ENCODE measurements at regions of chr4 and their contacts with region 1.

Region 1: GRCh38 chr4:94877973-94878372 is 120.2 kb downstream of the BMPR1B start:
- DNase-seq: peak; percentile 66
- ATAC-seq: peak; percentile 76
- H3K4me3 ChIP-seq: no peak overlapping the region
- H3K27ac ChIP-seq: peak overlapping the region; percentile 84; the same call in 1 of the 2 replicates
- H3K4me1 ChIP-seq: peaks cover 10% of the 10 kb centered on the region
- H3K27me3 ChIP-seq: no peaks in the 10 kb centered on the region
- CTCF ChIP-seq: no peak
- POLR2A ChIP-seq: no peak
- RAD21 ChIP-seq: no peak

Region 2: GRCh38 chr4:94641702-94642560 is 236.0 kb before region 1 on chr4:
- CTCF ChIA-PET with region 1: no interaction called
- POLR2A ChIA-PET with region 1: no interaction called
- dilution Hi-C with region 1: no loop called
- in situ Hi-C with region 1: no loop called
- intact Hi-C with region 1: loop called (anchors 10 kb)
- DNase-seq: peak; percentile 78
- ATAC-seq: peak; percentile 83
- H3K4me3 ChIP-seq: no peak overlapping the region
- H3K27ac ChIP-seq: no peak overlapping the region
- H3K4me1 ChIP-seq: peaks cover 2% of the 10 kb centered on the region; the same call in 1 of the 2 replicates
- H3K27me3 ChIP-seq: no peaks in the 10 kb centered on the region
- CTCF ChIP-seq: no peak
- POLR2A ChIP-seq: no peak
- RAD21 ChIP-seq: no peak

Region 3: DNA sequence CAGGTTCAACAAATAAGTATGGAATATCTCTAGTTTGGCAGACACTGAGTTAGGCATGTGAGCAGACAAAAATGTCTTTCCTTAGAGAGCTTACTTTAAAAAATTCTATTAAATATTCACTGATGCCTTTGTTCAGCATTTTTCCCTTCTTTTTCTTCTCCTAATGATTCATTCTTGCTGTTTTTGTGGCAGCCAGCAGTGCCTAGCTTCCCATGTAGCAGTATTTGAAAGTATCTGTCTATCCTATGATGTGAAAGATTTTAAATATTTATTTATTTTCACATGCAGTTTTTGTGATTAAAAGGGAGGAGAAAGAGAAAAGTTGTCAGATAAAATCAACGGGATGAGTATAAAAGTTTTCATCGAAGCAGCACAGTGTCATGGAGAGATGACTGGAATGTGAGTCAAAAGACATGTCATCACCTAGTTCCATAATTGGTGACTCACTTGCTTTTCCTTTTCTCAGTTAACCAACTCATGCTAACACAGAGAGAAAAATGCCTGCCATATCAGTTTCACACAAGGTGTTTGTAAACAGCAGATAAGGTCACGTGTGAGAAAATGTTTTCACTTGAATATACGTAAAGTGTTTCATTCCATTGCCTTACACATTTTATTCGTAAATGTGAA is 50.4 kb before region 1 on chr4:
- CTCF ChIA-PET with region 1: interaction called, 5 read pairs
- POLR2A ChIA-PET with region 1: no interaction called
- dilution Hi-C with region 1: no loop called
- in situ Hi-C with region 1: no loop called
- intact Hi-C with region 1: loop called (anchors 5 kb)
- DNase-seq: peak; percentile 92
- ATAC-seq: peak; percentile 98
- H3K4me3 ChIP-seq: no peak overlapping the region
- H3K27ac ChIP-seq: 0 out of 2 replicates have a peak overlapping the region, but pooled peaks have one; percentile 29
- H3K4me1 ChIP-seq: peaks cover 2% of the 10 kb centered on the region; the same call in 1 of the 2 replicates
- H3K27me3 ChIP-seq: no peaks in the 10 kb centered on the region; the same call in 1 of the 2 replicates
- CTCF ChIP-seq: no peak
- POLR2A ChIP-seq: no peak
- RAD21 ChIP-seq: no peak

Region 4: GRCh38 chr4:94897023-94897422 is 19.1 kb after region 1 on chr4:
- CTCF ChIA-PET with region 1: no interaction called
- POLR2A ChIA-PET with region 1: no interaction called
- dilution Hi-C with region 1: no loop called
- in situ Hi-C with region 1: no loop called
- intact Hi-C with region 1: no loop called
- DNase-seq: no peak
- ATAC-seq: no peak
- H3K4me3 ChIP-seq: no peak overlapping the region
- H3K27ac ChIP-seq: no peak overlapping the region
- H3K4me1 ChIP-seq: no peaks in the 10 kb centered on the region
- H3K27me3 ChIP-seq: no peaks in the 10 kb centered on the region
- CTCF ChIP-seq: no peak
- POLR2A ChIP-seq: no peak
- RAD21 ChIP-seq: no peak

Region 5: GRCh38 chr4:95457353-95457752 is 579.4 kb after region 1 on chr4:
- CTCF ChIA-PET with region 1: no interaction called
- POLR2A ChIA-PET with region 1: no interaction called
- dilution Hi-C with region 1: no loop called
- in situ Hi-C with region 1: no loop called
- intact Hi-C with region 1: no loop called
- DNase-seq: no peak
- ATAC-seq: no peak
- H3K4me3 ChIP-seq: no peak overlapping the region
- H3K27ac ChIP-seq: no peak overlapping the region
- H3K4me1 ChIP-seq: no peaks in the 10 kb centered on the region
- H3K27me3 ChIP-seq: no peaks in the 10 kb centered on the region
- CTCF ChIP-seq: no peak
- POLR2A ChIP-seq: no peak
- RAD21 ChIP-seq: no peak